Head of caudate nucleus (tissue), 42 donors: ENCODE measurements at regions of chr20 and their contacts with region 1.

Region 1: DNA sequence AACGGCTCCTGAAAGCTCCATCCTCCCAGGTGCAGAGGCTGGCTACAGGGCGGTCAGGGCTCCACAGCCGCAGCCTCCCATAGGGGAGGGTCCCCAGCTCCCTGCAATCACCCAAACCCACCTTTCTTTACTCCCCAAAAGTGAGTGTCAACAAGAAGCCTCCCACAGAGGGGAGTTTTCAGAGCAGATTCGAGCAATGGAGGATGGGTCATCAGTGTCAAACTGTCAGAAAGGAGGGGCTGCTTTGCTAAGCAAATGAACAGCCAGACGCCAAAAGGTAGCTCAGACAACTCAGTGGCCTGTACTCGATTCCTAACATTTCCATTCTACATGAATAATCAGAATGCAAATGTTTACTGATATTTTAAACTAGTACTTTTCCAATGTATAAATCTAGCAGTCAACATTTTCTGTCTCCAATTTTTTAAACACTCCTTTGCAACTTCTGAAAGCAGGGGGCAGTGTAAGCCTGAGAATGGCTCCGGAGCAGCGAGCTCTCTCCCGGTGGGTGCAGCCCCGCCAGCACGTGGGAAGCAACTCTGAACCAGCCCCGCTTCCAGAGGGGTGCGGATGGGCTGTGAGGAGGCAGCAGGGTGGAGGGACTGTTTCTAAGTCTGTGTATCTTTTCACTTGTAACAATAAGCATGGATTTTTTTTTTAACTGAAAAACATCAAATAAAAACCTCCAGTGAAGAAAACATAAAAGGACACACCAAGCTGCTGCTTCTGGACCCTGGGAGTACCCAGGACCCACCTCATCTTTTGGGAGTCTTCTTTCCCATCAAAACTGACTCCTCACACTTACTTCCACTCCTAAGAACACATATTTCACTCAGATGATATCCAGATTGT is 54.9 kb downstream of the TAF4 start:
- DNase-seq: peak; percentile 48 to 87 (median 74)

Region 2: DNA sequence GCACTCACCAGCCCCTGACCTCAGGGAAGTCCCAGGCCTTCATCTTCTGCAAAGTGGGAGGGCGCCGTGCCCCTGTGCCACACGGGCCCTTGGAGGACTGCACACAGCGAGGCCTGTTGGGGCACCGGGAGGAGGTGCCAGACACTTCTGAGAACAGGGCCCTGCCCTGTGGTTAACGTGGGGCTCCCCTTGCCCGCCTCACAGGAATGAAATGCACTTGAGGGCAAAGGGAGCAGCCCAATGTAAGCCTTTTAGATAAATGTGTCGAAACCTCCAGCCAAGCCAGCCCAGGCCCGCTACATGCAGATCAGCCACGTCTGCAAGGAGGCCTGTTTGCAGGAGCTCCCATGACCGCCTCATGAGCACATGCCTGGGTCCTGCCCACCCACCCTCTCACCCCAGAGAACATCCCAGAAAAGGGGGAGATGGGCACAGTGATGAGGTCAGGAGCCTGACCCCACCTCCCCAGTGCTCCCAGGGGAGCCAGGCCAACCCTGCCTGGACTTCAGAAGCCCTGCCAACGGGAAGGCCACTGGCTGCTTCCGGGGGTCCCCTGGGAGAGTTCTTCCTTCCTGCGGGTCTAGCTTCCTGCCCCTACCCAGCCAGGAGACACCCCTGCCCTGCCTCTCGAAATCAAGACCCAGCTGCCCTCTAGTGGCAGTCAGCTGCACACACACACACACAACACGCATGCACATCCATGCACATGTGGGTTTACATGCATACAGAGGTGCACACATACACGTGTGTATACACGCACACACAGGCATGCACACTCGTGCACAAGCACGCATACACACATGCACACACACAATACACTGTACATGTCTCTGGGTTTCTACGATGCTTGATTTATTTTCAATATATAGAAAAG is 123.8 kb before region 1 on chr20:
- intact Hi-C with region 1: no loop called
- DNase-seq: peak in 41 of 42 donors; percentile 24 to 82 (median 57)

Region 3: GRCh38 chr20:62043131-62043914 is 32.5 kb after region 1 on chr20:
- intact Hi-C with region 1: no loop called
- DNase-seq: no peak

Region 4: DNA sequence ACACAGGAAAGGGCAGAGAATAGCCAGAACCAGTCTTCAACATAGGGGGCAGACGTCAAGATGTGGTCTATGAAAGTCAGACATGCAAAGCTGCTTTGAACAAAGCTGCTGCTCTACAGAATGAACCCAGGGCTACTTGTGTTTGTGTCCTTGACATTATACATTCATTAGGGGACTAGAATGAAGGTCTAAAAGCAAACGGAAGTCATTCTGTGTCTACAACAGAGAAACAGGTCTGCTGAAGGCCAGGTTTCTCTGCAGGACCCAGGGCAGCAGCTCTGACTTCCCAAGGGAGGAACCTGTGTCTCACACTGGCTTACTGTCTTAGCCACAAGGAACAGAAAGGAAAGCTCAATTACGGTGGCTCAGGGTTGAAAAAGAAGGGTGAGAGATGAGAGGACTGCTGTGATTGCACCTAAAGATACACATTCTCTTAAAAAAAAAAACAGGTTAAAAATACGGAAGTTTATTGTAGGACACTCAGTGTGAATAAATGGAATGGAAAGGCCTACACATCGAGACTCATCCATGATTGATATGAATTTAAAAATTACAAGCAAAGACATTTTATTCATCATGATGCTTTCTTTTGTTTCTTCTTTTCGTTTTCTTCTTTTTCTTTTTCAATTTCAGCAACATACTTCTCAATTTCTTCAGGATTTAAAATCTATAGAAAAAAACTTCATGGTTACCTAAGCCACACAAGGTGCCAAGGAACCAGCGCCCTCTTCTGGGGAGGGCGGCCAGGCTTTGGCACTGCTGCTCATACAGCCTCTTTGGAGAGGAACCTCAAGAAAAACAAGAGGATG is 125.7 kb after region 1 on chr20:
- intact Hi-C with region 1: loop called (anchors 5 kb)
- DNase-seq: peak; percentile 39 to 84 (median 73)